ENCODE measurements at regions of chrX and their contacts with region 1.

Region 1: GRCh38 chrX:140057001-140057411 is 91.7 kb upstream of the CXorf66 start:
- DNase-seq: peak; percentile 62
- ATAC-seq: peak; percentile 99
- H3K4me3 ChIP-seq: peak overlapping the region in 1 of 2 experiments; percentile 39; a peak in 2 of 4 replicates
- H3K27ac ChIP-seq: no peak overlapping the region
- H3K4me1 ChIP-seq: no peaks in the 10 kb centered on the region
- H3K27me3 ChIP-seq: peaks cover 5% of the 10 kb centered on the region; the same call in 1 of the 2 replicates
- CTCF ChIP-seq: peak; percentile 92

Region 2: DNA sequence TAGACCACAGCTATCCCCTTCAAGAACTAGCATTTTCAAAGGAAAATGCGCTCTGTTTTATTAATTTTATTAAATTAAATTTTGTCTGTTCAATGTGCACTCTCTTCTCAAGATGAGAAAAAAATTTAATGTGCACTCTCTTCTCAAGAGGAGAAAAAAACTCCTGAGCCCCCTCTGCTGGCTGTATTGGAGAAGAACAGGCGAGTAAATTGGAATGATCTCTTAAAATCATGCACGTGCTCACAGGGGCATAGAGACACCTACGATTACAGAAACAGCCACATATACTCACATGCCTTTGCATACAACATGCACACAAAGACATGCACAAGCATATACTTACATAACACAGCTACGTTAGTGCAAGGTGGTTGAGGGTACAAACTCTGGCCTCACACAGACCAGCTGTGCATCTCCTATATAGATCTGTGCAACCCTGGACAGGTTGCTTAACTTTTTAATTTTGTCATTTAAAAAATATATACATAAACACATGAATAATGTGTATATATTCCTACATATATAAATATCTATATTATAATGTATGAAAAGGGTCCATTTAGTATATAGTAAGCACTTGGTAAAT is 84.5 kb after region 1 on chrX:
- CTCF ChIA-PET with region 1: interaction called, 6 read pairs
- POLR2A ChIA-PET with region 1: no interaction called
- in situ Hi-C with region 1: no loop called
- intact Hi-C with region 1: loop called (anchors 2 kb)
- DNase-seq: peak; percentile 20
- ATAC-seq: no peak; the same call in 1 of the 2 replicates
- H3K4me3 ChIP-seq: no peak overlapping the region
- H3K27ac ChIP-seq: no peak overlapping the region
- H3K4me1 ChIP-seq: no peaks in the 10 kb centered on the region
- H3K27me3 ChIP-seq: no peaks in the 10 kb centered on the region
- CTCF ChIP-seq: peak; percentile 78

Region 3: DNA sequence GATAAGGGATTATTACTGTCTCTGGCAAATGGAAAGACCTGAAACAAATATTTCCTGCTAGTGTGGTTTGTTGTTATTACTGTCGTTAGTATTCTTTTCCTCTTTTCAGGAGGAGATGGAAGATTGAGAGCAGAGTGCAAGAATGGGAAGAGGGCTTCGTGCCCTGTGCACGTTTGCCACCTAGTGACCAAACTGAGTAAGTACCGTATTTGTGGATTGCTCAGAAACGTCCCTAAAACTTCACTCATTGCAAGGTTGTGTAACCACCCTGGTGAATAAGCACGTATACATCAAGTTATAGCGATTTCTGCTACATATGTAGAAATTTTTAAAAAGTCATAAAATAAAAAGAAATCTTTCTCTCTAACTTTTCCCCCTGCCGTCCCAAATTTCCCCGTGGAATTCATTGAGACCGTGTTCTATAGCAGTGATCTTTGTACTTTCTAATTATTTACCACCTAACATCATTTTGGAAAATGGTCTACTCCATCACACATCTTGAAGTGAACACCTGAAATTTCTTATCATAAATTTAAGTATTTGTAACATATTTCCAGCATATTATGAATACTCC is 676.9 kb after region 1 on chrX:
- CTCF ChIA-PET with region 1: no interaction called
- POLR2A ChIA-PET with region 1: no interaction called
- in situ Hi-C with region 1: no loop called
- intact Hi-C with region 1: loop called (anchors 10 kb)
- DNase-seq: peak; percentile 55
- ATAC-seq: peak; percentile 89
- H3K4me3 ChIP-seq: no peak overlapping the region
- H3K27ac ChIP-seq: no peak overlapping the region
- H3K4me1 ChIP-seq: no peaks in the 10 kb centered on the region
- H3K27me3 ChIP-seq: no peaks in the 10 kb centered on the region
- CTCF ChIP-seq: peak; percentile 84